IMR-90 (cell line): ENCODE measurements at regions of chr5 and their contacts with region 1.

Region 1: DNA sequence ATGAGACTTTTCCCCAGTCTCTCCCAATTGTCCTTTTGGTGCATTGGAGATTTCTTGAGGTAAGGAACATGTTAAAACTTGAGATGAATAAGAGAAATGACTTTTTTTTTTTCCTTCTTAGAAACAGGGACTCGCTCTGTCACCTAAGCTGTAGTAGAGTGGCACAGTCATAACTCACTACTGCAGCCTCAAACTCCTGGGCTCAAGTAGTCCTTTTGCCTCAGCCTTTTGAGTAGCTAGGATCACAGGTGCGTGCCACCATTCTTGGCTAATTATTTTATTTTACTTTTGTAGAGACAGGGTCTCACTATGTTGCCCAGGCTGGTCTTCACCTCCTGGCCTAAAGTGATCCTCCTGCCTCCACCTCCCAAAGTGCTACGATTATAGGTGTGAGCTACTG is 25.9 kb downstream of the CDC42SE2 start:
- DNase-seq: no peak
- ATAC-seq: no peak
- H3K4me3 ChIP-seq: no peak overlapping the region
- H3K27ac ChIP-seq: no peak overlapping the region
- H3K4me1 ChIP-seq: no peaks in the 10 kb centered on the region
- H3K27me3 ChIP-seq: no peaks in the 10 kb centered on the region
- CTCF ChIP-seq: no peak
- POLR2A ChIP-seq: no peak
- RAD21 ChIP-seq: no peak

Region 2: GRCh38 chr5:131355971-131356528 is 66.3 kb after region 1 on chr5:
- CTCF ChIA-PET with region 1: no interaction called
- POLR2A ChIA-PET with region 1: interaction called, 11 read pairs
- dilution Hi-C with region 1: no loop called
- in situ Hi-C with region 1: no loop called
- intact Hi-C with region 1: no loop called
- DNase-seq: peak; percentile 59
- ATAC-seq: peak; percentile 89
- H3K4me3 ChIP-seq: no peak overlapping the region
- H3K27ac ChIP-seq: peak overlapping the region; percentile 45; the same call in 1 of the 2 replicates
- H3K4me1 ChIP-seq: peaks cover 7% of the 10 kb centered on the region
- H3K27me3 ChIP-seq: no peaks in the 10 kb centered on the region
- CTCF ChIP-seq: no peak
- POLR2A ChIP-seq: no peak
- RAD21 ChIP-seq: no peak

Region 3: DNA sequence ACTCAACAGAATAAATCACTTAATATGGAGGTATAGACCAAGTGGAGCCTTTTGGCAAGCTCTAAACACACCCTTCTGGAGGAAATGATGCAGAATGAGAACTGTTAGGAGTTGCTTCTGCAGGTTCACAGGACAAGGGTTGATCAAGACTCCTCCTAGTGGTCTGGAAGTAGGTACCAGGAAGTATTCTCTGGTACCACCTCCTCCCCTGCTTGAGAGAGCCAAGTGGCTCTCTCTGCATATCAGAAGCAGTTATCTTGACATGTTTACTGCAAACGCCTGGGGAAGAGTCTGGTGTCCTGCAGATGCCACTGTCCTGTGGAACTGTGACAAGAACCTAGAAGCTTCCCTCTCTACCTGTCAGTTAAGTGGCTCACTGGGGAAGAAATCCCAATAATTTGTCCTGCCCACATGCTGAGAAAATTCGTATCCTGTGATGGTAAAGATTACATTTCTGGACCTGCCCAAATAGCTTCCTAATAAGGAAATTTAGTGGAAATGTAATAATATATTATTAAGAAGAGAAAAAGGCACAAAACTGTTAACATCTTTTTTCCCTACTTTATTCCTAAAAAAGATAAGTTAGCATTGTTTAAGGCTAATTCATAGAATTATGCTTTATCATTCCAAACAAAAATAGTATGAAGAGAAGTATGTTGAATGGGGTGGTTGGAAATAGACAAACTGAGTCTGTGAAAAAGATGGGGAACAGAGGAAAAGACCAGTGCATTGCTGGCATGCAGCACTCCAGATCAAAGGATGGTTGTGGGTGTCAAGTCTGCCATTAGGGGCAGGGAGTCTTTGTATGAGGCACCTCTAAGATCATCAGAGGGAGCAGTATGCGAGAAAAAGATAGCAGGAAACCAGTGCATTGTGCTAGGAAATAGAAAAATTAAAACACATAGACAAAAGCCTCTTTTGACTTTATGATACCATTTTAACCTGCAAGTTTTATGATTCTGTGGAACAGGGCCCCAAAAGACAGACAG is 93.0 kb after region 1 on chr5:
- CTCF ChIA-PET with region 1: no interaction called
- POLR2A ChIA-PET with region 1: no interaction called
- dilution Hi-C with region 1: no loop called
- in situ Hi-C with region 1: no loop called
- intact Hi-C with region 1: no loop called
- DNase-seq: peak; percentile 58
- ATAC-seq: peak; percentile 42; the same call in 1 of the 2 replicates
- H3K4me3 ChIP-seq: no peak overlapping the region
- H3K27ac ChIP-seq: no peak overlapping the region
- H3K4me1 ChIP-seq: peaks cover 15% of the 10 kb centered on the region
- H3K27me3 ChIP-seq: no peaks in the 10 kb centered on the region
- CTCF ChIP-seq: peak; percentile 50
- POLR2A ChIP-seq: no peak
- RAD21 ChIP-seq: peak; percentile 68

Region 4: DNA sequence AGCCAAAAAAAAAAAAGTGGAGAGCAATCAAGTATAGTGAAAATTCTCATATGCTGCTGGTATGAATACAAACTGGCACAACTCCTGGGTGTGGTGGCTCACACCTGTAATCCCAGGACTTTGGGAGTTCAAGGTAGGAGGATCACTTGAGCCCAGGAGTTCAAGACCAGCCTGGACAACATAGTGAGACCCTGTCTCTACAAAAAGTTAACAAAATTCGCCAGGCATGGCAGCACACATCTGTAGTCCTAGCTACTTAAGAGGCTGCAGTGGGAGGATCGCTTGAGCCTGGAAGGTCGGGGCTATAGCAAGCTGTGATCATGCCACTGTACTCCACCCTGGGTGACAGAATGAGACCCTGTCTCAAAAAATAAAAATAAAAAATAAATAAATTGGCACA is 455.4 kb after region 1 on chr5:
- CTCF ChIA-PET with region 1: no interaction called
- POLR2A ChIA-PET with region 1: no interaction called
- dilution Hi-C with region 1: no loop called
- in situ Hi-C with region 1: no loop called
- intact Hi-C with region 1: no loop called
- DNase-seq: no peak
- ATAC-seq: no peak
- H3K4me3 ChIP-seq: no peak overlapping the region
- H3K27ac ChIP-seq: no peak overlapping the region
- H3K4me1 ChIP-seq: peaks cover 1% of the 10 kb centered on the region; the same call in 1 of the 2 replicates
- H3K27me3 ChIP-seq: no peaks in the 10 kb centered on the region
- CTCF ChIP-seq: no peak
- POLR2A ChIP-seq: no peak
- RAD21 ChIP-seq: no peak